Naive thymus-derived CD8-positive, alpha-beta T cell (primary cell): ENCODE measurements at regions of chr19 and their contacts with region 1.

Region 1: GRCh38 chr19:48795055-48795684 is 15.7 kb downstream of the BCAT2 start:
- DNase-seq: peak; percentile 76 to 91 (median 78)
- ATAC-seq: peak; percentile 98
- H3K4me3 Mint-ChIP-seq: peak overlapping the region; percentile 83 to 98 (median 95)
- H3K27ac Mint-ChIP-seq: peak overlapping the region; percentile 61 to 97 (median 93)
- H3K4me1 Mint-ChIP-seq: peaks cover 6 to 14% (median 7%) of the 10 kb centered on the region in 4 donors
- H3K27me3 Mint-ChIP-seq: no peaks in the 10 kb centered on the region

Region 2: GRCh38 chr19:48683349-48683748 is 111.8 kb before region 1 on chr19:
- POLR2A ChIA-PET with region 1: no interaction called
- DNase-seq: peak in 6 of 10 donors; percentile 27 to 74 (median 43)
- ATAC-seq: peak; percentile 45 to 82
- H3K4me3 Mint-ChIP-seq: peak overlapping the region in 8 of 10 donors; percentile 8 to 64 (median 46)
- H3K27ac Mint-ChIP-seq: peak overlapping the region in 3 of 10 donors; percentile 37 to 76 (median 59)
- H3K4me1 Mint-ChIP-seq: peaks cover 0 to 2% (median 0%) of the 10 kb centered on the region in 4 donors
- H3K27me3 Mint-ChIP-seq: no peaks in the 10 kb centered on the region

Region 3: DNA sequence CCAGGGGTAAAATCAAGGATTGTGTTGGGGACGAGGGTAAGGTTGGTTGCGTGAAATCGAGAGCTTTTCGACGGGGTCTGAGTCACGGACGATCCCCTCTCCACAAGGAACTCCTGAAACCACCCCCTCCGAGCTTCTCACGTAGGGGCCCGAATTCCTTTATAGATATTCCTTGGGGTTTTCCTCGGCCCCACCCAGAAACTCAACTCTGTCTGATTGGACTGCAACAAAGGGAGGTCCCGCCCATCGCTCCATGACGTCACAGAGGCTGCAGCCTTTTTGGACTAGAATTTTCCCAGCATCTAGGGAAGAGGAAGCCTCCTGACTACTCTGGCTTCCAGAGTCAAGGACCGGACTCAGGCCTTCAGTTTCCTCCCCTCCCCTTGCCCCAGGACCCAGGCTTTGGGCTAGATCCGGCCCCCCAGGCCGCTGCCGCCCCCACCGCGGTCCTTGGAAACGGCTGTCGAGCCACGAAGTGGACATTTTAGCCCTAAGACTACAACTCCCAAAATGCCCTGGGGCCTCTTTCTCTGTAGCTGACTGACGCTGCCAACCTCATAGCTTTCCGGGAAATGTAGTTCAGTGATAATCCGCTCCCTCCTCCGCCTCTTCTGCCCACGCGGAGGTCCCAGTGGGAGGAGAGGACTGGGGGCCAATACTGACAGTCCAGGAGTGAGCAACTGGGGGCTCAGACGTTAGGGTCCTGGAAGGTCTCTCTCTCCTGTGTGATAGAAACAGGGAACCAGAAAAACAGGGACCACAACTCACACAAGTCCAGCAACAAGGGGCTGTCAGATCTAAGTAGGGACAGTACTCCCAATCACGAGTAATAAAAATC is 48.2 kb before region 1 on chr19 and contains the start of gene IZUMO1:
- POLR2A ChIA-PET with region 1: no interaction called
- DNase-seq: peak in 7 of 10 donors; percentile 15 to 55 (median 48)
- ATAC-seq: peak; percentile 73 to 80
- H3K4me3 Mint-ChIP-seq: peak within 1 kb of the TSS in 5 of 10 donors; percentile 9 to 29 (median 14)
- H3K27ac Mint-ChIP-seq: peak within 1 kb of the TSS in 1 of 10 donors; percentile 21
- H3K4me1 Mint-ChIP-seq: peaks cover 6 to 18% (median 9%) of the 10 kb centered on the region in 4 donors
- H3K27me3 Mint-ChIP-seq: peaks cover 7 to 32% (median 17%) of the 10 kb centered on the region in 5 donors
- polyA plus RNA-seq, gene IZUMO1: not detected

Region 4: DNA sequence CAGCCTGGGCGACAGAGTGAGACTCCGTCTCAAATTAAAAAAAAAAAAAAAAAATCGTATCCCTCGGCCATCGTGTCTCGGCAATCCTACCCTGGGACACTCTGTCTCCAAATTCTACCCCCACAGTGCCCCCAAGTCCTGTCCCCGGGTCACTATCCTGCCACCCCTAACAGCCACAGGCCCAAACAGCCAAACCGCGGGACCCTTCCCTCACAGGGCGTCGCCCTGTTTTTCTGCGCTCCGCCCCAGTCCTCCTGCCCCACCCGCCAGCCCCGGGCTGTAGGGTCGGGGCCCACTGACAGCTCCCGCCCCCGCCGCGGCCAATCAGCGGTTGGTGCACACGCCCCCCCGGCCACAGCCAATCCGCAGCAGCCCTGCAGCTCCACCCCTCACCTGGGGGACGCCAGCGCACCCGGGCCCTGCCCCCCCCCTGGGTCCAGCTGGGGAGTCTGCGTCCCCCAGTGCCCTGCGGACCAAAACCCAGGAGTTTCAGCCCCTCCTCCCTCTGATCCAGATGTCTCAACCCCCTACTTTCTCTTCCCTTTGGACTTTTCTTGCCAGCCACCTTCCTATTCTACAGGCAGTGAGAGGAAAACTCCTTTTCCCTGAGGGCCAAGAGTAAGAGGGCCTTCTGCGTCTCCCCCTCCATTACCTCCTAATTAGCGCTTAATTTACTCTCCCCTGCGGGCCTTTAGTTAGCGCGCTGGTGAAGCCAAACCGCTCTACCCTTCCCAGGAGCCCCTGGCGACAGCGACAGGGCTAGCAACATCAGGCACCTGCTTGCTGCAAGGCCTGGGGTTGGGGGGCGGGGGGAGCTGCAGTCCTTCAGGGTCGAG is 17.1 kb after region 1 on chr19:
- POLR2A ChIA-PET with region 1: interaction called, 16 read pairs
- DNase-seq: peak; percentile 37 to 75 (median 54)
- ATAC-seq: peak; percentile 69
- H3K4me3 Mint-ChIP-seq: peak overlapping the region; percentile 77 to 89 (median 82)
- H3K27ac Mint-ChIP-seq: peak overlapping the region in 9 of 10 donors; percentile 43 to 92 (median 80)
- H3K4me1 Mint-ChIP-seq: peaks cover 22 to 42% (median 29%) of the 10 kb centered on the region in 4 donors
- H3K27me3 Mint-ChIP-seq: no peaks in the 10 kb centered on the region

Region 5: DNA sequence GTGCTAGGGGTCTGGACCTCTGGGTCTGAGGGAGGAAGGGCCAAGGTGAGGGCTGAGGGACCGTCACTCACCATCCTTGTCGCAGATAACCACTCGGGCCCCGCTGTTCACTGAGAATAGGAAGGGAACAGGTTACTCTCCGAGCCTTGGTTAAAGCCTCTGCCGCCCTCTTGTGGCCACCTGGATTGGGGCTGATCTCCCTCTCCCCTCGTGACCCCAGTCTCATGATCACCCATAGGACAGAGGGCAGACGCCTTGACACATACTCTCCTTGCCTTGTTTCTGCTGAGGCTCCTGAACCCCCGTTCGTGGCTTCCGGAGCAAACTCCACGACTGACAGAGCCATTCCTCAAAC is 40.5 kb after region 1 on chr19:
- POLR2A ChIA-PET with region 1: interaction called, 21 read pairs
- DNase-seq: peak; percentile 87 to 96 (median 91)
- ATAC-seq: peak; percentile 82 to 88
- H3K4me3 Mint-ChIP-seq: peak overlapping the region; percentile 79 to 94 (median 89)
- H3K27ac Mint-ChIP-seq: peak overlapping the region; percentile 58 to 95 (median 84)
- H3K4me1 Mint-ChIP-seq: peaks cover 17 to 31% (median 23%) of the 10 kb centered on the region in 4 donors
- H3K27me3 Mint-ChIP-seq: peaks cover 0 to 2% (median 0%) of the 10 kb centered on the region in 5 donors